ENCODE measurements at regions of chr5 and their contacts with region 1.

Region 1: GRCh38 chr5:67268231-67269021 is 71.8 kb upstream of the CD180 start:
- DNase-seq: peak; percentile 68 to 74
- ATAC-seq: peak; percentile 89 to 93
- H3K4me3 ChIP-seq: peak overlapping the region in 3 of 4 donors; percentile 3 to 32 (median 23)
- H3K27ac ChIP-seq: peak overlapping the region; percentile 75 to 88 (median 84)
- H3K4me1 ChIP-seq: peaks cover 27 to 30% of the 10 kb centered on the region in 2 donors
- H3K27me3 ChIP-seq: no peaks in the 10 kb centered on the region
- CTCF ChIP-seq: no peak
- POLR2A ChIP-seq: no peak

Region 2: GRCh38 chr5:67301285-67301903 is 33.0 kb after region 1 on chr5:
- in situ Hi-C with region 1: no loop called
- intact Hi-C with region 1: loop called (anchors 5 kb)
- DNase-seq: peak; percentile 62 to 82
- ATAC-seq: peak; percentile 71 to 77
- H3K4me3 ChIP-seq: no peak overlapping the region
- H3K27ac ChIP-seq: peak overlapping the region; percentile 49 to 70 (median 62)
- H3K4me1 ChIP-seq: peaks cover 11 to 13% of the 10 kb centered on the region in 2 donors
- H3K27me3 ChIP-seq: no peaks in the 10 kb centered on the region
- CTCF ChIP-seq: no peak
- POLR2A ChIP-seq: no peak

Region 3: DNA sequence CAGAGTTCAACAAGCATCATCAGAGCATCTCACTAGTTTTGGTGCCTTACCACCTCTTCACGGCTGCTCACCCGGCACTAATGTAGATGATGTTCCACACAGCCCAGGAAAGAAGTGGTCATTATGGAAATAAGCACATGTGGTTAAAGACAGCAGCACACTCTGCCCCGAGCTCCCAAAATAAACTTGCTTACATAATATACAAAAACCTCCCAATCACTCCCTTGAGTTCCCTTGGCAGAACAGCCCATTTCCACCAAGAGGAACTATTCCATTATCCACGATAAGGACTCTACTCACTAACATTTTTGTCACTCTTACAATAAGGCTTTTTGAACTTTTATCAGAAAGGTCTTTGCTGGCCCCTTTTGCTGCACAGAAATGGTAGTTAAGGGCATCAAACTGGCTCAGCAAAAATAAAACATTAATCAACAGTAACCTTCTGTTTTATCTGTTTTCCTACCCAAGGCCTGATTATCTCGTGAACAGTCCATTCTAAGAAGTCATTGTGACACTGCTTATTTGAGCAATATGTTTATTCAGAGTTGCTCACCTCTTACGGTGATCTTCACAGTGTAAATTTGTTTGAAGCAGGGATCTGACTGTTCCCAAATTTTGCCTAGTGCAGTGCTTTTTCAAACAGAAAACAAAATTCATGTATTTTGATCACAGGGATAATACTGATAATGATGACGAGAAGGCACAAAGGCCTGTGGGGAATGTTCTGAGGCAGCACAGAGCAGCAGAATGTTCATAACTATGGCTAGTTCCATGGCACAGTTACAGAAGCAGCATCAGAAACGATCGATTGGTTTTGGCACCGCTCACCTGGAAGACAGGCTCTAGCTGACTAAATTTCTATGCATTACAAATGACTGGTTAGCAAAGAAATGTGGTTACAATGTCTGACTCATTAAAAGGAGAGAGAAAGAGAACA is 547.3 kb after region 1 on chr5:
- in situ Hi-C with region 1: loop called in 1 of 4 experiments (anchors 25 kb)
- intact Hi-C with region 1: no loop called
- DNase-seq: peak; percentile 28 to 35
- ATAC-seq: peak; percentile 86 to 90
- H3K4me3 ChIP-seq: no peak overlapping the region
- H3K27ac ChIP-seq: peak overlapping the region; percentile 27 to 55 (median 50)
- H3K4me1 ChIP-seq: peaks cover 7 to 22% of the 10 kb centered on the region in 2 donors
- H3K27me3 ChIP-seq: no peaks in the 10 kb centered on the region
- CTCF ChIP-seq: no peak
- POLR2A ChIP-seq: no peak

Measured in gastrocnemius medialis (tissue), 4 donors.